Right ventricle myocardium inferior (tissue), 1 donor: ENCODE measurements at regions of chr7 and their contacts with region 1.

Region 1: DNA sequence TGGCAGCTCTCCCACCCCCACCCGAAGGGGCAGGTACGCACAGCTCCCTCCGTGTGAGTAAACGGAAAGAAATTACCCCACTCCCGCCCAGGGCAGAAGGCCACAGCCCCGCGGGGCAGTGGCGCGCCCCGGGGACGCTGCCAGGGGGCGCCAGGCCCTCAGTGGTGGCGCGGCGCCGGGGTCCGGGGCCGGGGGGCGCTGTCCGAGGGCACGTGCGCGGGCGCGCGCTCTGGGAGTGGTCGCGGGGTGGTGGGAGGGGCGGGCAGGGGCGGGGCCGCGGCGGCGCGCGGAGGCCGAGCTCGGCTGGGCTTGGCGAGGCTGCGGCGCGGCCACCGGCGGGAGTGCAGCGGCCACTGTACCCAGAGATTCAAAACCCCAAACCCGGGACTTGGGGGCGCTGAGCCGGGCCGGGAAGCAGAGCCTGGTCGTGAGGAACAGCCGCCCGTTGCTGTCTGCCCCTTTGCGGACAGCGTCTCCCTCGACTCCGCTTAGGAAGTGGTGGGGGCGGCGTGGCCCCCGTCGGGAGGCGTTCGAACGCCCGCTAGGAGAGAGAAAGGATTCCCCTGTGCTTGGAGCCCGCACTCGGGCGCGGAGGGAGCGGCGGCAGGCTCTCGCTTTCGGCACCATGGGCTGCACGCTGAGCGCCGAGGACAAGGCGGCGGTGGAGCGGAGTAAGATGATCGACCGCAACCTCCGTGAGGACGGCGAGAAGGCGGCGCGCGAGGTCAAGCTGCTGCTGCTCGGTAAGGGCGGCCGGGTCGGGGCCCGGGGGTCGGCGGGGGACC is at the start of gene GNAI1:
- DNase-seq: peak; percentile 77
- ATAC-seq: peak; percentile 87
- total RNA-seq, gene GNAI1: 12.4 TPM

Region 2: GRCh38 chr7:80107278-80107677 is 27.4 kb before region 1 on chr7:
- intact Hi-C with region 1: no loop called
- DNase-seq: no peak
- ATAC-seq: no peak

Region 3: DNA sequence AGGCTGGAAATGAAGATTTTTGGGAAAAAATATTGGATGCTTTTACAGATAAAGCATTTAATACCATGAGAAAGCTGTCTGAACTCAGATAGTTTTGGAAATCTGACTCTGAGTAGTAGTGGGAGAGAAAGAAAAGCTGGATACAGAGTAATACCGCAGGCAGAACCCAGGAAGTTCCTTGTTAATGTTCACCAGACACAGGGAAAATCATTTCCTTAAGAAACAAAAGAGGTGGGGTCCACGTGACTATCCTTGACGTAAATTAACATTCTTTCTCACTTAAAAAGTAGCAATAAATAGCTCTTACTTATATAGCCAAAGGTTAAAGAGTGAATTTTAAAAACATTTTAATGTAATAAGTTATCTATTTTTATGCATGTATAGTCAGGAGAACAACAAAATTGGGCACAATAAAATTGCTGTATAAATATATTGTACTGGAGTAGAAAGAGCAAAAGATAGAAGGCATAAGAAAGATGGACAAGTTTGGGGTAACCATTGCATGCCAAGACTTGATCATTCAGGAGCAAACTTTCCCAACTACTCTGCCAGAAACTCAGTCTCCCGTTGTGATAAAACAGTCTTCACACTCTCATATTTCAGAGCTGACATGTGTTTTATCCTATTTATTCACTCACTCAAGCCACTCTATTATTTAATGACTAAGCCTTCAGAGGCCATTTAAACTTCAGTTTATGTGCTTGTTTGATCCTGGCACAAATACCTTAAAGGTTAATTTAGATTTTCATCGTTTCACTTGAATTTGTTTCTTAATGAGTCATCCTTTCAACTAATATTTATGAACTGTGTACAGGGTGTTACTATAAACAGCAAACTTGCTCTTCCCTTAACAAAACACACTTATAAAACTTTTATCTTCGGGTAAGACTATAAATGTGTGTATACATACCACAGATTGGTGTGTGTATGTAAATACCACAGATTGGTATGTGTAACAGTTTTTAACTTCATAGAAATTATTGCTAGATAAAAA is 143.0 kb after region 1 on chr7:
- intact Hi-C with region 1: loop called (anchors 5 kb)
- DNase-seq: no peak
- ATAC-seq: no peak

Region 4: DNA sequence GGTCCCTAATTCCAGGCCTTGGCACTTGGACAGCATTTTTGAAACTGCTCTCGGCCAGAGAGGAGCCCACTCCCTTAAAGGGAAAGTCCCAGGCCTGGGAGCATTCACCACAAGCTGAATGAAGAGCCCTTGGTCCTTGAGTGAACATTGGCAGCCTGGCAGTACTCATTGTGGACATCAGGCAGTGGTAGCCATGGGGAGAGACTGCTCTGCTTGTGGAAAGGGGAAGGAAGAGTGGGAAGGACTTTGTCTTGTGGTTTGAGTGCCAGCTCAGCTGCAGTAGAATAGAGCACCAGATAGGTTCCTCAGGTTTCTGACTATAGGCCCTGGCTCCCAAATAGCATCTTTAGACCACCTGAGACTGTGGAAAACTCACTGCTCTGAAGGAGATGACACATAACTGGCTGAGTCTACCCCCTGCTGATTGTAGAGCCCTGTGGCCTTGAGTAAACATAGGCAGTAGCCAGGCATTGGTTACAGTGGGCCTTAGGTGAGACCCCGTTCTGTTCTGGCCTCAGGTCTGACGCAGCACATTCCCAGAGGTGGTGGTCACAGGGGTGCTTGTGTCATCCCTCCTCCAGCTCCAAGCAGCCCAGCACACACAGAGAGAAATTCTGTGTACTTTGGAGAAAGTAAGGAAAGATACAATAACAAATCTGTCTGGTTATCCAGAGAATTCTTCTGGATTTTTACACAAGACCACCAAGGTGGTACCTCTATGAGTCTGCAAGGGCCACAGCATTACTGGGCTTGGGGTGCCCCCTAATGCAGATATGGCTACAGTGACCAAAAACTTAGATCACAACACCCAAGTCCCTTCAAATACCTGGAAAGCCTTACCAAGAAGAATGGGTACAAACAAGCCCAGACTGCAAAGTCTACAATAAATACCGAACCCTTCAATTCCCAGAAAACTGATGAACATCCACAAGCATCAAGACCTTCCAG is 153.7 kb after region 1 on chr7:
- intact Hi-C with region 1: loop called (anchors 5 kb)
- DNase-seq: no peak
- ATAC-seq: no peak

Region 5: GRCh38 chr7:80392229-80393169 is 257.8 kb after region 1 on chr7:
- intact Hi-C with region 1: loop called (anchors 5 kb)
- DNase-seq: no peak
- ATAC-seq: no peak